BJ (cell line): ENCODE measurements at regions of chr15 and their contacts with region 1.

Region 1: GRCh38 chr15:68252925-68253534 is 23.5 kb upstream of the CLN6 start:
- DNase-seq: no peak
- H3K4me3 ChIP-seq: no peak overlapping the region
- H3K27me3 ChIP-seq: no peaks in the 10 kb centered on the region
- CTCF ChIP-seq: peak; percentile 85

Region 2: GRCh38 chr15:68277603-68278344 is 24.7 kb after region 1 on chr15 and contains the start of gene FEM1B:
- CTCF ChIA-PET with region 1: interaction called, 18 read pairs
- POLR2A ChIA-PET with region 1: no interaction called
- DNase-seq: peak; percentile 49
- H3K4me3 ChIP-seq: peak within 1 kb of the TSS; percentile 85
- H3K27me3 ChIP-seq: no peaks in the 10 kb centered on the region
- CTCF ChIP-seq: no peak
- polyA plus RNA-seq, gene FEM1B: 58.3 and 78.4 TPM in 2 replicates

Region 3: GRCh38 chr15:68298882-68299381 is 45.9 kb after region 1 on chr15:
- CTCF ChIA-PET with region 1: interaction called, 89 read pairs
- POLR2A ChIA-PET with region 1: interaction called, 3 read pairs
- DNase-seq: no peak
- H3K4me3 ChIP-seq: peak overlapping the region; percentile 9; the same call in 1 of the 2 replicates
- H3K27me3 ChIP-seq: no peaks in the 10 kb centered on the region
- CTCF ChIP-seq: no peak

Region 4: DNA sequence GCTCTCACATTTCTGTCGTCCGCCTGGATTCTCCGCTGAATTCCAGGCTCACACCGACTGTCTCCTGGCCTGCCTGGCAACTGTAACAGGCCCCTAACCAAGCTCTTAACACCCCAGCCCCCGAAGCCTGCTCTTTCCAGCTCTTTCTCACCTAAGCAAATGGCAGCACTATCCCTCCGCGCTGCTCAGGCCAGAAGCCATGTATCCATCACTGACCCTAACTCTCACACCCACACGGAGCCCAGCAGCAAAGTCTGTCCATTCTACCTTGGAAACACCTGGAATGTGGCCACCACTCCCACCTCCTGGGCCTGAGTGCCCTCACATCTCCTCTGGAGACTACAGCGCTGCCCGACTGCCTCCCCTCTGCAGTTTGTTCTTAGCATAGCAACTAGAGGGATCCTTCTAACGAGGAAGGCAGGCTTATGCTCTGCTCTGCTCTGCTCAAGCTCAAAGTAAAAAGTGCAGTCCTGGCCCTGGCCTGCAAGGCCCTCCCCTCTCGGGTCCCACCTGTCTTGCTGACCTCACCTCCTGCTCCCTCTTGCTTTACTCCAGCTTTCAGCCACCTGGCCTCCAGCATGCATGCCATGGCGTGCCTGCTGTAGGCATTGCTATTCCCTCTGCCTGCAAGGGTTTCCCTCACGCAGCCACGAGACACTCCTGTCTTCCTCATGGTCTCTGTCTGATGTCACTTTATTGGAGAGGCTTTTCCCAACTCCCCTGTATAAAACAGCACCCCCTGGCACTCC is 51.7 kb after region 1 on chr15:
- CTCF ChIA-PET with region 1: interaction called, 89 read pairs
- POLR2A ChIA-PET with region 1: no interaction called
- DNase-seq: no peak
- H3K4me3 ChIP-seq: no peak overlapping the region
- H3K27me3 ChIP-seq: no peaks in the 10 kb centered on the region
- CTCF ChIP-seq: no peak